ENCODE measurements at regions of chr2 and their contacts with region 1.

Region 1: GRCh38 chr2:128027801-128028667 is at the start of gene SAP130:
- DNase-seq: peak; percentile 71
- ATAC-seq: peak; percentile 91
- H3K4me3 ChIP-seq: peak within 1 kb of the TSS; percentile 96
- H3K27ac ChIP-seq: peak within 1 kb of the TSS; percentile 73
- H3K4me1 ChIP-seq: 0 out of 2 replicates have a peak, but pooled peaks cover 3% of the 10 kb centered on the region
- H3K27me3 ChIP-seq: no peaks in the 10 kb centered on the region; a peak in 1 of 4 replicates
- CTCF ChIP-seq: no peak
- EP300 ChIP-seq: no peak
- POLR2A ChIP-seq: peak; percentile 87
- RAD21 ChIP-seq: no peak
- polyA plus RNA-seq, gene SAP130: 5.0 to 6.8 TPM

Region 2: GRCh38 chr2:127857265-127857808 is 170.7 kb before region 1 on chr2:
- CTCF ChIA-PET with region 1: no interaction called
- POLR2A ChIA-PET with region 1: no interaction called
- RAD21 ChIA-PET with region 1: no interaction called
- SMC1A ChIA-PET with region 1: interaction called, 3 read pairs
- in situ Hi-C with region 1: no loop called
- intact Hi-C with region 1: loop called (anchors 1 kb)
- DNase-seq: no peak
- ATAC-seq: peak; percentile 43
- H3K4me3 ChIP-seq: peak overlapping the region; percentile 93
- H3K27ac ChIP-seq: peak overlapping the region; percentile 65
- H3K4me1 ChIP-seq: 0 out of 2 replicates have a peak, but pooled peaks cover 2% of the 10 kb centered on the region
- H3K27me3 ChIP-seq: no peaks in the 10 kb centered on the region
- CTCF ChIP-seq: no peak
- EP300 ChIP-seq: no peak
- POLR2A ChIP-seq: no peak
- RAD21 ChIP-seq: no peak

Region 3: GRCh38 chr2:128057334-128057733 is 29.3 kb after region 1 on chr2:
- CTCF ChIA-PET with region 1: no interaction called
- POLR2A ChIA-PET with region 1: interaction called, 12 read pairs
- RAD21 ChIA-PET with region 1: no interaction called
- SMC1A ChIA-PET with region 1: no interaction called
- in situ Hi-C with region 1: no loop called
- intact Hi-C with region 1: no loop called
- DNase-seq: no peak
- ATAC-seq: no peak
- H3K4me3 ChIP-seq: no peak overlapping the region
- H3K27ac ChIP-seq: no peak overlapping the region
- H3K4me1 ChIP-seq: no peaks in the 10 kb centered on the region
- H3K27me3 ChIP-seq: no peaks in the 10 kb centered on the region; a peak in 1 of 4 replicates
- CTCF ChIP-seq: no peak
- EP300 ChIP-seq: no peak
- POLR2A ChIP-seq: no peak
- RAD21 ChIP-seq: no peak

Region 4: DNA sequence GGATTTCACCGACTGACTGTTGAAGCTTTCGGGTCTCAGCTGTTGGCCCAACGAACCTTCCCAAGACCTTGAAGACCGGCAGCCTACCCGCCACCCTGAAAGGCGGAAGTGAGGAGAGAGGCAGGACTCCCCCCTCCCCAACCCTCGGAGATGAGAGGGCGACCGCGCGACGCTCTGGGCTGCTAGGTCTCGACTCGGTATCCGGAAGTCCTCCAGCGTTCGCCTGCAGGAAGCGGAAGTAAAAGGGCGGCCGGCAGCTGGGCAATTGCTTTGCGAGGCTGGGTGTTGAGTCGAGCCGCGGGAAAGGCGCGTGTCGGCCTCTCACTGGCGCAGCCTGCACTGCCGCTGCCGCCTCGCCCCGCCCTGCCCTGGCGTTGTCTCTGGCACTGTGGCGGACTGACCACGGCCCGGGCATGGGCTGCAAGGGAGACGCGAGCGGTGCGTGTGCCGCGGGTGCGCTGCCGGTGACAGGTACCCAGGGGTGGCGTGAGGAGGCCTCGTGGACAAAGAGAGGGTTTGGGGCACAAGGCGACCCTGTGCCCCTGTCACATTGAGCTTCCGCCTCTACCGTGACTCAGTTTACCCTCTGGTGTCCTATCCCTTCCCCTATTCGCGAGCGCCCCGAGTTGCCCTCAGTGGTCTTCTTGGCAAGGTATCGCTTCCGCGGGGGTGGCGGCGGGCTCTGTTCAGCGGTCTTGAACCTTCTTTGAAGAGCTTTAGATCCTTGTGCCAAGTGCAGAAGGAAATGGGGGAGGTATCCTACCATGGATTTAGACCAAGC is 63.1 kb after region 1 on chr2 and contains the start of gene UGGT1:
- CTCF ChIA-PET with region 1: interaction called, 3 read pairs
- POLR2A ChIA-PET with region 1: no interaction called
- RAD21 ChIA-PET with region 1: interaction called, 3 read pairs
- SMC1A ChIA-PET with region 1: interaction called, 3 read pairs
- in situ Hi-C with region 1: no loop called
- intact Hi-C with region 1: loop called (anchors 5 kb)
- DNase-seq: peak; percentile 93
- ATAC-seq: peak; percentile 97
- H3K4me3 ChIP-seq: peak within 1 kb of the TSS; percentile 89
- H3K27ac ChIP-seq: peak within 1 kb of the TSS; percentile 89
- H3K4me1 ChIP-seq: peaks cover 11% of the 10 kb centered on the region
- H3K27me3 ChIP-seq: no peaks in the 10 kb centered on the region
- CTCF ChIP-seq: no peak
- EP300 ChIP-seq: no peak
- POLR2A ChIP-seq: peak; percentile 99
- RAD21 ChIP-seq: no peak
- polyA plus RNA-seq, gene UGGT1: 4.1 to 5.9 TPM

Region 5: GRCh38 chr2:128196471-128196931 is 168.5 kb after region 1 on chr2:
- CTCF ChIA-PET with region 1: no interaction called
- POLR2A ChIA-PET with region 1: no interaction called
- RAD21 ChIA-PET with region 1: no interaction called
- SMC1A ChIA-PET with region 1: no interaction called
- in situ Hi-C with region 1: no loop called
- intact Hi-C with region 1: no loop called
- DNase-seq: no peak
- ATAC-seq: peak; percentile 61
- H3K4me3 ChIP-seq: no peak overlapping the region
- H3K27ac ChIP-seq: no peak overlapping the region
- H3K4me1 ChIP-seq: peaks cover 3% of the 10 kb centered on the region; the same call in 1 of the 2 replicates
- H3K27me3 ChIP-seq: no peaks in the 10 kb centered on the region
- CTCF ChIP-seq: no peak; a peak in 1 of 6 replicates
- EP300 ChIP-seq: no peak
- POLR2A ChIP-seq: no peak
- RAD21 ChIP-seq: no peak